ENCODE measurements at regions of chr19 and their contacts with region 1.

Region 1: DNA sequence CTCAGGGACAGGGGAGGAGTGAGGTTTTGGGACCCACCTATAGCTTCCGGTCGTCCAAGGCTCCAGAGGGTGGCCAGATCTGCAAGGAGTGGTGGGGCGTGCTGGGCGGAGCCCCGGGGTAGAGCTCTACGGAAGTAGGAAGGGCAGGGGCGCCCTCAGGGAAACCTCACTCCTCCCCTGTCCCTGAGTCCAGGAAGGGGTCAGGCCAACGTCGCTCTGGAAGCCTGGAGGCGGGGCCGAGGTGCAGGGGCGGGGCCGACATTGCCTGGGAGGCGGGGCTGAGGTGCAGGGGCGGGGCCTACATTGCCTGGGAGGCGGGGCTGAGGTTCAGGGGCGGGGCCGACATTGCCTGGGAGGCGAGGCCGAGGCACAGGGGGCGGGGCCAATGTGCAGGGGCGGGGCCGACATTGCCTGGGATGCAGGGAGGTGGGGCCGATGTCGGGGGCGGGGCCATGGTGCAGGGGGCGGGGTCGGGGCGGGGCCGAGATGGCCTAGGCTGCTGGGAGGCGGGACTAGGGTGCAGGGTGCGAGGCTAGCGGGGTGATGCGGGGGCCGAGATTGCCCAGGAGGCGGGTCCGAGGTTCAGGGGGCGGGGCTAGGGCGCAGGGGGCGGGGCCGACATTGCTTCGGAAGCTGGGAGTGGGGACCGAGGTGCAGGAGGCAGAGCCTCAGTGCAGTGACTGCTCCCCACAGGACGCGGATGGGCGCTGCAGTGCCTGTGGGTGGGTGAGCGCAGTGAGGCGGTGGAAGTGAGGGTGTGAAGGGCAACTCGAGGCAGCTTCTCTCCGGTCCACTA is 4.9 kb upstream of the PALM start:
- DNase-seq: peak; percentile 90 to 100
- H3K4me3 ChIP-seq: peak overlapping the region; percentile 1 to 59 (median 32); a peak in 7 of 8 replicates
- H3K27ac ChIP-seq: no peak overlapping the region
- H3K4me1 ChIP-seq: peaks cover 0 to 8% (median 3%) of the 10 kb centered on the region in 4 experiments; a peak in 6 of 7 replicates
- H3K27me3 ChIP-seq: no peaks in the 10 kb centered on the region
- CTCF ChIP-seq: no peak; a peak in 1 of 4 replicates
- EP300 ChIP-seq: no peak
- POLR2A ChIP-seq: peak in 1 of 2 experiments; percentile 47; a peak in 2 of 3 replicates
- RAD21 ChIP-seq: no peak

Region 2: GRCh38 chr19:441213-441836 is 262.5 kb before region 1 on chr19:
- CTCF ChIA-PET with region 1: no interaction called
- POLR2A ChIA-PET with region 1: no interaction called
- DNase-seq: no peak
- H3K4me3 ChIP-seq: no peak overlapping the region
- H3K27ac ChIP-seq: no peak overlapping the region
- H3K4me1 ChIP-seq: peaks cover 0 to 11% (median 2%) of the 10 kb centered on the region in 4 experiments; a peak in 3 of 7 replicates
- H3K27me3 ChIP-seq: no peaks in the 10 kb centered on the region
- CTCF ChIP-seq: no peak
- EP300 ChIP-seq: no peak
- POLR2A ChIP-seq: no peak
- RAD21 ChIP-seq: no peak

Region 3: DNA sequence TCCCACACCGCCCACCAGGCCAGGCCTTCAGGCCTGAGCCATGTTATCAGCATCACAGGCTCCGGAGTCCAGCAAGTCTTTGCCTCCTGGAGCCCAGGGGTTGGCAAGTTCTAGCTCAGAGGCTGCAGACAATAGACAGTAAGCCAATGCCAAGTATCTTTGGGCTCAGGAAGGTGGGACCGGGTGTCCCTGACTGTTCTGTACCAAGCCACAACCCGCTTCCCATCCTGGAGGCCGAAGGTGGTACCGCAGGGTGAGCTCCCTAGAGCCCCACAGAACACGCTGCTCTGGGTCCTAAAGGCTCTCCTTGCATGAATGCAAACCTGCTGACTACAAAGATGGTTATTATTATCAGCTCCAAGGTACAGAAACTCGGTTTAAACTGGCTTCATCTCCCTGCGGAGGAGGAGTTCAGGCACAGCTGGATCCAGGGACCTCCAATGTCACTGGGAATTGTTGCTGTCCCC is 33.2 kb before region 1 on chr19:
- CTCF ChIA-PET with region 1: interaction called, 16 read pairs
- POLR2A ChIA-PET with region 1: interaction called, 3 read pairs
- DNase-seq: no peak
- H3K4me3 ChIP-seq: no peak overlapping the region
- H3K27ac ChIP-seq: no peak overlapping the region
- H3K4me1 ChIP-seq: no peaks in the 10 kb centered on the region; a peak in 1 of 7 replicates
- H3K27me3 ChIP-seq: peaks cover 0 to 12% (median 2%) of the 10 kb centered on the region in 4 experiments; a peak in 3 of 7 replicates
- CTCF ChIP-seq: peak; percentile 41 to 55 (median 52)
- EP300 ChIP-seq: no peak
- POLR2A ChIP-seq: no peak
- RAD21 ChIP-seq: no peak; a peak in 1 of 4 replicates

Region 4: DNA sequence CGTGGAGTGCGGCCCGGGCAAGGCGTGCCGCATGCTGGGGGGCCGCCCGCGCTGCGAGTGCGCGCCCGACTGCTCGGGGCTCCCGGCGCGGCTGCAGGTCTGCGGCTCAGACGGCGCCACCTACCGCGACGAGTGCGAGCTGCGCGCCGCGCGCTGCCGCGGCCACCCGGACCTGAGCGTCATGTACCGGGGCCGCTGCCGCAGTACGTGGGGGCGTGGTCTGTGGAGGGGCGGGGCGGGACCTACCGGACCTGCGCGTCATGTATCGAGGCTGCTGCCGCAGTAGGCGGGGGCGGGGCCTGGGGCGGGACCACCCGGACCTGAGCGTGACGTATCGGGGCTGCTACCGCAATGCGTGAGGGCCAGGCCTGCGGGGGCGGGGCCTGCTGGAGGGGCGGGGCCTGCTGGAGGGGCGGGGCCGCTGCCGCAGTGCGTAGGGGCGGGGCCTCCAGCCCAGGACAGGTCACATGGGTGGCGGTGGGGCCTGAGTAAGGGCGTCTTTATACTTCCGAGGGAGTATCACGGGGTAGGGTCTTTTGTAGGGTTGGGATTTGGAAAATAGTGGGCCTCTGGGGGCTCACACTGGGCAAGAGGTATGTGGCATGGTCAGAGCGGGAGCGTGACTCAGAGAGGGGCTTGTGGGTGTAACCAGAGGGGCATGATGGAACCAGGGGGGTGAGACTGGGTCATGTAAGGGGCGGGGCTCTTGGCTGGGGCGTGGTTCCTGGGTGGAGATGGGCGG is 23.4 kb before region 1 on chr19:
- CTCF ChIA-PET with region 1: interaction called, 13 read pairs
- POLR2A ChIA-PET with region 1: interaction called, 11 read pairs
- DNase-seq: peak; percentile 99
- H3K4me3 ChIP-seq: peak overlapping the region; percentile 61 to 97 (median 66)
- H3K27ac ChIP-seq: peak overlapping the region; percentile 91
- H3K4me1 ChIP-seq: peaks cover 0 to 10% (median 1%) of the 10 kb centered on the region in 4 experiments; a peak in 4 of 7 replicates
- H3K27me3 ChIP-seq: peaks cover 0 to 16% (median 10%) of the 10 kb centered on the region in 4 experiments; a peak in 5 of 7 replicates
- CTCF ChIP-seq: peak; percentile 37 to 54 (median 54)
- EP300 ChIP-seq: no peak
- POLR2A ChIP-seq: peak in 1 of 2 experiments; percentile 57; a peak in 1 of 3 replicates
- RAD21 ChIP-seq: peak in 1 of 2 experiments; percentile 37; a peak in 1 of 4 replicates

Region 5: DNA sequence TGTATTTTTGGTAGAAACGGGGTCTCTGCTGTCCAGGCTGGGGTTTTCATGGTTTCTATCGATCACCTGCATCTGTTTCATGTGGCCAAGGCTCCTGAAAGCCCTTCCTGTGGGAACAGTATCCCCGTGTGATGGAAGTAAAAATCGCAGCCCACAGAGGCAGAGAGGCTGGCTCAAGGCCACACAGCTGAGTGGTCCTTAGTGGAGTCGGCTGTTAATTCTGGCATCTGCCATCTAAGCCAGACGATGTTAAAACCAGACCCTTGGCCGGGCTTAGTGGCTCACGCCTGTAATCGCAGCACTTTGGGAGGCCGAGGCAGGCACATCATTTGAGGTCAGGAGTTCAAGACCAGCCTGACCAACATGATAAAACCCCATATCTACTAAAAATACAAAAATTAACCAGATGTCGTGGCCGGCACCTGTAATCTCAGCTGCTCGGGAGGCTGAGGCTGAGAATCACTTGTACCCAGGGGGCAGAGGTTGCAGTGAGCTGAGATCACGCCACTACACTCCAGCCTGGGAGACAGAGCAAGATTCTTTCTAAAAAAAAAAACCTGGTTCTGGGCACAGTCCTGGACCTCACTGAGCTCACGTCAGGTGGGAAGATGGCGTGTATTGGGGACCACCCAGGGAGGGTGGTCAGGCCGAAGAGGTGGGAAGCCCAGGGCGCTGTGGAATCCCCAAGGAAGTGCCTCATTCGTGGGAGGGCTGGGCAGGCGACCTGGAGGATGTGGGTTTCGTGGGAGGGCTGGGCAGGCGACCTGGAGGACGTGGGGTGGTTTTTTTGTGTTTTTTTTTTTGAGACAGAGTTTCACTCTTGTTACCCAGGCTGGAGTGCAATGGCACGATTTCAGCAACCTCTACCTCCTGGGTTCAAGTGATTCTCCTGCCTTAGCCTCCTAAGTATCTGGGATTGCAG is 28.6 kb after region 1 on chr19:
- CTCF ChIA-PET with region 1: interaction called, 22 read pairs
- POLR2A ChIA-PET with region 1: interaction called, 6 read pairs
- DNase-seq: no peak
- H3K4me3 ChIP-seq: no peak overlapping the region
- H3K27ac ChIP-seq: no peak overlapping the region
- H3K4me1 ChIP-seq: no peaks in the 10 kb centered on the region
- H3K27me3 ChIP-seq: no peaks in the 10 kb centered on the region
- CTCF ChIP-seq: no peak
- EP300 ChIP-seq: no peak
- POLR2A ChIP-seq: no peak
- RAD21 ChIP-seq: no peak

Region 6: GRCh38 chr19:778910-779653 is 75.2 kb after region 1 on chr19:
- CTCF ChIA-PET with region 1: no interaction called
- POLR2A ChIA-PET with region 1: no interaction called
- DNase-seq: no peak
- H3K4me3 ChIP-seq: no peak overlapping the region
- H3K27ac ChIP-seq: no peak overlapping the region
- H3K4me1 ChIP-seq: peaks cover 7 to 15% (median 11%) of the 10 kb centered on the region in 4 experiments
- H3K27me3 ChIP-seq: no peaks in the 10 kb centered on the region
- CTCF ChIP-seq: no peak
- EP300 ChIP-seq: no peak
- POLR2A ChIP-seq: no peak
- RAD21 ChIP-seq: no peak